Panc1 (cell line): ENCODE measurements at regions of chr9 and their contacts with region 1.

Region 1: DNA sequence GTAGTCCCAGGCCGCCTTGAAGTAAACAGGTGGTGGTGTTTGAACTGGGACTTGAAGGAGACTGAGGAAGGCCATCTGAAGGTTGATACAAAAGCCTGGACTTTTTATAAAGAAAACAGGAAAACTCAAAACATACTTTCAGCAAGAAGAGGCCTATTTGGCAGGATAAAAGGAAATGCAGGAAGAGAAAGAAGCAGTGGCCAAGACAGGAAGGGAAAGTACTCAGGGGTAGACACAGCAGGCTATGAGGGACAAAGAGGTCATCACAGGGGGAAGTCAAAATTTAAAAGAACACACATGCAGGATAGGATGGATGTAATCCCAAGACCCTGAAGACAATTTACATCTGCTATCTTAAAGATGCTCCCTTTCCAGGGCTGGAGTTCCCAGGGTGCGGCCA is 13.0 kb downstream of the TLE1 start:
- DNase-seq: no peak
- ATAC-seq: no peak
- H3K4me3 ChIP-seq: no peak overlapping the region
- H3K27ac ChIP-seq: no peak overlapping the region
- H3K4me1 ChIP-seq: no peaks in the 10 kb centered on the region
- H3K27me3 ChIP-seq: no peaks in the 10 kb centered on the region
- CTCF ChIP-seq: no peak

Region 2: GRCh38 chr9:81619348-81620001 is 56.9 kb before region 1 on chr9:
- CTCF ChIA-PET with region 1: no interaction called
- POLR2A ChIA-PET with region 1: no interaction called
- in situ Hi-C with region 1: no loop called
- intact Hi-C with region 1: no loop called
- DNase-seq: no peak
- ATAC-seq: no peak
- H3K4me3 ChIP-seq: no peak overlapping the region
- H3K27ac ChIP-seq: no peak overlapping the region
- H3K4me1 ChIP-seq: no peaks in the 10 kb centered on the region
- H3K27me3 ChIP-seq: no peaks in the 10 kb centered on the region
- CTCF ChIP-seq: no peak

Region 3: GRCh38 chr9:81656004-81656403 is 20.4 kb before region 1 on chr9:
- CTCF ChIA-PET with region 1: no interaction called
- POLR2A ChIA-PET with region 1: interaction called, 13 read pairs
- in situ Hi-C with region 1: no loop called
- intact Hi-C with region 1: no loop called
- DNase-seq: no peak
- ATAC-seq: no peak
- H3K4me3 ChIP-seq: no peak overlapping the region
- H3K27ac ChIP-seq: no peak overlapping the region
- H3K4me1 ChIP-seq: no peaks in the 10 kb centered on the region
- H3K27me3 ChIP-seq: no peaks in the 10 kb centered on the region
- CTCF ChIP-seq: no peak

Region 4: GRCh38 chr9:81705578-81705977 is 29.2 kb after region 1 on chr9:
- CTCF ChIA-PET with region 1: no interaction called
- POLR2A ChIA-PET with region 1: no interaction called
- in situ Hi-C with region 1: no loop called
- intact Hi-C with region 1: no loop called
- DNase-seq: no peak
- ATAC-seq: no peak
- H3K4me3 ChIP-seq: no peak overlapping the region
- H3K27ac ChIP-seq: no peak overlapping the region
- H3K4me1 ChIP-seq: no peaks in the 10 kb centered on the region
- H3K27me3 ChIP-seq: no peaks in the 10 kb centered on the region
- CTCF ChIP-seq: no peak